K562 (cell line): ENCODE measurements at regions of chr3 and their contacts with region 1.

Region 1: GRCh38 chr3:15268033-15268631 is 62.1 kb downstream of the CAPN7 start:
- DNase-seq: peak; percentile 82 to 94 (median 84)
- ATAC-seq: peak; percentile 81
- H3K4me3 ChIP-seq: no peak overlapping the region
- H3K27ac ChIP-seq: peak overlapping the region; percentile 82; the same call in 1 of the 3 replicates
- H3K4me1 ChIP-seq: peaks cover 29 to 32% of the 10 kb centered on the region in 2 experiments
- H3K27me3 ChIP-seq: no peaks in the 10 kb centered on the region
- CTCF ChIP-seq: peak; percentile 97 to 99 (median 99)
- EP300 ChIP-seq: no peak; the same call in 1 of the 2 replicates
- POLR2A ChIP-seq: no peak
- RAD21 ChIP-seq: peak; percentile 100

Region 2: DNA sequence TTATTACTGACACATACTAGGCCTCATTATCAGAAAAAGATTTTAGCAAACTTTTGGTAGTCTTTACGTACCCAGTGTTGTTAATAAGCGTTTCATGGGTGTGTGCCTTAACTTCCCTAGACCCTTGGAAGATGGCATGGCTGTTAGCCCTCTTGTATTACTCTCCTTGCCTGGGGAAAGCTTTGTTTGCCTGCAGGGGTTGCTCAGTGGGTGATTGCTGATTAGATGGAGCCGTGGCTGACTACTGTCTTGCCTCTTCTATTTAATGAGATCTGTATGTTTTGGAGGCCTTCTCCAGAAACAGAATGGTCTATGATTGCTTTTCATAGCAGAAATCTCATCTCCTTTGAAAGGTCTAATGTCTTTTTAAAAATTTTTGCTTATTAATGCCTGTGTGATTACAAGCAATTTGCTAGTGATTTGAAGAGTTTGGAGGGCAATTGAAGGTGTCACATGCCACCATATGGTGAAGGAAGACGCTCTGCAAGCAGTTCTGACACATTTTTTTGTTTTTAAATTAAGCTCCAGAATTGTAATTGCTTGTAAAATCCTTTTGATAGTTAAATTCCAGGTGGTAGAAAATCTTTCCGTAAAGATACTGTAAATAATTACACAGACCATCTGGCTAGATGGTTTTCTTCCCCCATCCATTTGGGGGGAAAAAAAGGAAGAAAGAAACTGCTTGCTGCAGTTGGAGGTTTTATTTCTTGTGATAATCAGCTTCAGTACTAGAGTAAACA is 604.6 kb before region 1 on chr3:
- CTCF ChIA-PET with region 1: no interaction called
- POLR2A ChIA-PET with region 1: no interaction called
- in situ Hi-C with region 1: no loop called
- intact Hi-C with region 1: no loop called
- DNase-seq: no peak
- ATAC-seq: no peak
- H3K4me3 ChIP-seq: no peak overlapping the region
- H3K27ac ChIP-seq: no peak overlapping the region
- H3K4me1 ChIP-seq: no peaks in the 10 kb centered on the region
- H3K27me3 ChIP-seq: no peaks in the 10 kb centered on the region
- CTCF ChIP-seq: no peak
- EP300 ChIP-seq: no peak
- POLR2A ChIP-seq: no peak
- RAD21 ChIP-seq: no peak

Region 3: DNA sequence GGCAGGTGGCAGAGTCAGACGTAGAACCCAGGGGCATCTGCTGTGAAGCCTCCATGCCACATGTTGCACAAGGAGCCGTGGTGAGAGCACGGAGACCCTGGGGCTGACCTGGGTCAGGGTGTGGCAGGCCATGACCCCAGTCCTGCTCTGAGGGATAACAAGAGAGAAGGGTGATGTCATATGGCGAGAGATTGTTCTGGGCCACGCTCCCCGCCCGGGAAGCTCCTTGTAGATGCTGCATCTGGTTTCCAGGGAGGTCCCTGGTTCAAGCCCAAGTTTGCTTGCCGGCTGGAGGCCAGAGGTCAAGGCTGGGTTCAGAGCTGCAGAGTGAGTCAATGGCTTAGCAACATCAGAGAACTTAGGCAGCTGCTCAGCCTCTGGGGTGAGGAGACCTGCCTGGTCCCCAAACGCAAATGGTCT is 432.1 kb before region 1 on chr3:
- CTCF ChIA-PET with region 1: no interaction called
- POLR2A ChIA-PET with region 1: no interaction called
- in situ Hi-C with region 1: no loop called
- intact Hi-C with region 1: no loop called
- DNase-seq: peak; percentile 86 to 95 (median 91)
- ATAC-seq: peak; percentile 94
- H3K4me3 ChIP-seq: no peak overlapping the region
- H3K27ac ChIP-seq: peak overlapping the region; percentile 58
- H3K4me1 ChIP-seq: peaks cover 24 to 29% of the 10 kb centered on the region in 2 experiments; a peak in 4 of 5 replicates
- H3K27me3 ChIP-seq: peaks cover 27 to 29% of the 10 kb centered on the region in 2 experiments
- CTCF ChIP-seq: no peak
- EP300 ChIP-seq: peak; percentile 71
- POLR2A ChIP-seq: no peak
- RAD21 ChIP-seq: peak in 1 of 2 experiments; percentile 8; a peak in 1 of 4 replicates

Region 4: GRCh38 chr3:15042936-15043335 is 225.2 kb before region 1 on chr3:
- CTCF ChIA-PET with region 1: no interaction called
- POLR2A ChIA-PET with region 1: no interaction called
- in situ Hi-C with region 1: no loop called
- intact Hi-C with region 1: no loop called
- DNase-seq: no peak
- ATAC-seq: no peak
- H3K4me3 ChIP-seq: no peak overlapping the region
- H3K27ac ChIP-seq: peak overlapping the region; percentile 42; the same call in 1 of the 3 replicates
- H3K4me1 ChIP-seq: peaks cover 3 to 17% of the 10 kb centered on the region in 2 experiments; a peak in 4 of 5 replicates
- H3K27me3 ChIP-seq: no peaks in the 10 kb centered on the region
- CTCF ChIP-seq: no peak
- EP300 ChIP-seq: no peak; the same call in 1 of the 2 replicates
- POLR2A ChIP-seq: no peak
- RAD21 ChIP-seq: no peak

Region 5: DNA sequence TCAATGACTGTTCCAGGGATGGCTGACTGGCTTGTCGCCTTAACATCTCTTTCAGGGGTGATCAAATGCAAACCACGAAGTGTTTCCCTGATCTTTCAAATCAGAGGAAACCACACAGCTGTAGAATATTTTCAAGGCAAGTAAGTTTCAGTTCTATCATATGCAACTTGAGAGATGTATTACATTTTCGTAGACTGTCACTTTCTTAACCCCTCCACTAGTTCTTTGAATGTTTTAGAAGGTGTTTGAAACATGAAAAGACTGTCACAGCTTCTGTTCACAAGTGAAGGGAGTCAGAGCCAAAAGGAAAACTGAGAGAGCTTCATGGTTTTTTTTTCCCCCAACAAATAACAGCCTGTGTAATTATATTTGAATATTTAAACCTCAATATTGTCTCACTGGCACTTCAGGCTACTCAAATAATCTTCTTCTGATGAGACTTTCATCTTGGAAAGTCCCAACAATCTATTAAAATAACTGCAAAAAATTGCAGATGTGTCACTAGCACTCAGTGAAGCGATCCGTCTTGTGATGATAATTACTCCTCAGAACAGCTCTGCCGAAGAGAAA is 88.0 kb before region 1 on chr3:
- CTCF ChIA-PET with region 1: no interaction called
- POLR2A ChIA-PET with region 1: no interaction called
- in situ Hi-C with region 1: no loop called
- intact Hi-C with region 1: no loop called
- DNase-seq: no peak
- ATAC-seq: no peak
- H3K4me3 ChIP-seq: no peak overlapping the region
- H3K27ac ChIP-seq: no peak overlapping the region
- H3K4me1 ChIP-seq: no peaks in the 10 kb centered on the region
- H3K27me3 ChIP-seq: peaks cover 18 to 19% of the 10 kb centered on the region in 2 experiments; a peak in 3 of 5 replicates
- CTCF ChIP-seq: no peak
- EP300 ChIP-seq: no peak
- POLR2A ChIP-seq: no peak
- RAD21 ChIP-seq: no peak

Region 6: GRCh38 chr3:15256861-15257341 is 11.2 kb before region 1 on chr3:
- CTCF ChIA-PET with region 1: no interaction called
- POLR2A ChIA-PET with region 1: interaction called, 37 read pairs
- in situ Hi-C with region 1: no loop called
- intact Hi-C with region 1: no loop called
- DNase-seq: no peak
- ATAC-seq: no peak
- H3K4me3 ChIP-seq: no peak overlapping the region
- H3K27ac ChIP-seq: no peak overlapping the region
- H3K4me1 ChIP-seq: peaks cover 0 to 20% of the 10 kb centered on the region in 2 experiments; a peak in 4 of 5 replicates
- H3K27me3 ChIP-seq: no peaks in the 10 kb centered on the region
- CTCF ChIP-seq: no peak
- EP300 ChIP-seq: no peak
- POLR2A ChIP-seq: 0 out of 2 replicates have a peak, but pooled peaks have one; percentile 10
- RAD21 ChIP-seq: no peak

Region 7: DNA sequence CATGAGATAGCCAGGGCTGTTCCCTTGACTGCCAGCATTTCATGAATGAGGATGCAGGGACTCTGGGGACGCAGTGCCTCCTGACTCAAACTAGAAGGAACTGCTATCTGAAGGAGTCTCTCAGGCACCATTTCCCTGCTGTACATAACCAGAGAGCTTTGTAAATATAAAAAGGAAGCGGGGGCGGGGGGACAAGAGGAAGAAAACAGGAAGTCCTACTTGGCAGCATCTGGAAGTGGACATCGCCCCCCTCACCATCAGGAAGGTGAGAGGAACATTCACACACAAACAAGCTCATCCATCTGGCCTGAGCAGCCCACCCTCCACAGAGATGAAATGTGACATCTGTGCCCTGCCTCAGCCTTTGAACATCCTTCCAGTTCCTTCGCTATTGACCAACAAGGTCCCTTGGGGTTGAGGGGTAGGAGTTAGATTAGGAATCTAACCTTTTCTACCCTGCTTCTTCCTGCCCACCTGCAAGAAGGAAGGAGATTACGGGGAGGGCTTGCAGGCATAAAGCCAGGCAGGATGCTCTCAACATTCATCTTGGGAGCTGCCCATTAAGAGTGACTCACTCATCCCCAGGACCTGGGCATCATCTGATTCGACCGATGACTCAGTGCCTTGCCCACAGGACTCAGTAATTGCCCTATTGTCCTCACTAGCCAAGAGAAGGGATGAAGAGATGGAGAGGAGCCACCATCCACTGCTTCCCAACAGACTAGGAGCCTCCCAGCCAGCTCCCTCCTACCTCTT is 32.4 kb after region 1 on chr3:
- CTCF ChIA-PET with region 1: no interaction called
- POLR2A ChIA-PET with region 1: interaction called, 4 read pairs
- in situ Hi-C with region 1: no loop called
- intact Hi-C with region 1: loop called (anchors 1 kb)
- DNase-seq: no peak
- ATAC-seq: peak; percentile 10; the same call in 2 of the 3 replicates
- H3K4me3 ChIP-seq: no peak overlapping the region
- H3K27ac ChIP-seq: no peak overlapping the region
- H3K4me1 ChIP-seq: peaks cover 45 to 49% of the 10 kb centered on the region in 2 experiments
- H3K27me3 ChIP-seq: no peaks in the 10 kb centered on the region
- CTCF ChIP-seq: peak in 1 of 3 experiments; percentile 31; a peak in 2 of 6 replicates
- EP300 ChIP-seq: no peak
- POLR2A ChIP-seq: no peak
- RAD21 ChIP-seq: peak in 1 of 2 experiments; percentile 27; a peak in 2 of 4 replicates

Region 8: GRCh38 chr3:15339786-15340215 is 71.7 kb after region 1 on chr3:
- CTCF ChIA-PET with region 1: no interaction called
- POLR2A ChIA-PET with region 1: no interaction called
- in situ Hi-C with region 1: loop called (anchors 5 kb)
- intact Hi-C with region 1: no loop called
- DNase-seq: peak; percentile 65 to 72 (median 70)
- ATAC-seq: peak; percentile 77
- H3K4me3 ChIP-seq: no peak overlapping the region
- H3K27ac ChIP-seq: no peak overlapping the region
- H3K4me1 ChIP-seq: peaks cover 2 to 3% of the 10 kb centered on the region in 2 experiments; a peak in 2 of 5 replicates
- H3K27me3 ChIP-seq: no peaks in the 10 kb centered on the region
- CTCF ChIP-seq: no peak
- EP300 ChIP-seq: peak; percentile 66
- POLR2A ChIP-seq: no peak
- RAD21 ChIP-seq: no peak

Region 9: GRCh38 chr3:15384510-15385237 is 116.5 kb after region 1 on chr3:
- CTCF ChIA-PET with region 1: interaction called, 57 read pairs
- POLR2A ChIA-PET with region 1: interaction called, 5 read pairs
- in situ Hi-C with region 1: loop called (anchors 5 kb)
- intact Hi-C with region 1: no loop called
- DNase-seq: no peak
- ATAC-seq: no peak
- H3K4me3 ChIP-seq: no peak overlapping the region
- H3K27ac ChIP-seq: no peak overlapping the region
- H3K4me1 ChIP-seq: peaks cover 0 to 8% of the 10 kb centered on the region in 2 experiments; a peak in 2 of 5 replicates
- H3K27me3 ChIP-seq: no peaks in the 10 kb centered on the region; a peak in 1 of 5 replicates
- CTCF ChIP-seq: no peak
- EP300 ChIP-seq: no peak
- POLR2A ChIP-seq: no peak
- RAD21 ChIP-seq: no peak

Region 10: DNA sequence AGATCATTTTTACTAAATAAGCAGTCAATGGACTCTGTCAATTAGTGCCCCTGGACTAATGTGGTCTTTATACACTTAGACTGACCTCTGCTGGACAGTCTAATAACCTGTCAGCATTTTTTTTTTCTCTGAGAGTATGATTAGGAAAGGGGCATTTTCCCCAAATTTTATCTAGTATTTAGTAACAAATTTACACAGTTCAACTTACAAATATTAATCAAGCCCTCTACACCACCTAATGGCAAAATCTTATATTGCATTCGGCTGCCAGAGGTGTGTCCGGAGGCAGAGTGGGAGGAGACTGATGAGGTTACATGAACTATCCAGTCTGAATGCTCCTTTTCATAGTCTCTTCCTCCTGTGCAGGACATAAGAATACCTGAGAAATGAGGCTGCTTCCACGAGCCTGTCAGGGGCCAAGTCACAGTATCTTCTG is 289.4 kb after region 1 on chr3:
- CTCF ChIA-PET with region 1: interaction called, 9 read pairs
- POLR2A ChIA-PET with region 1: no interaction called
- in situ Hi-C with region 1: no loop called
- intact Hi-C with region 1: loop called (anchors 1 kb)
- DNase-seq: peak; percentile 52 to 81 (median 64)
- ATAC-seq: peak; percentile 98
- H3K4me3 ChIP-seq: no peak overlapping the region
- H3K27ac ChIP-seq: no peak overlapping the region; the same call in 2 of the 3 replicates
- H3K4me1 ChIP-seq: peaks cover 0 to 8% of the 10 kb centered on the region in 2 experiments; a peak in 2 of 5 replicates
- H3K27me3 ChIP-seq: no peaks in the 10 kb centered on the region
- CTCF ChIP-seq: peak; percentile 43 to 73 (median 68)
- EP300 ChIP-seq: no peak
- POLR2A ChIP-seq: no peak
- RAD21 ChIP-seq: peak; percentile 77 to 83